Activated CD8-positive, alpha-beta T cell treated with anti-CD3 and anti-CD28 coated beads for 36 hours (primary cell): ENCODE measurements at regions of chr1 and their contacts with region 1.

Region 1: DNA sequence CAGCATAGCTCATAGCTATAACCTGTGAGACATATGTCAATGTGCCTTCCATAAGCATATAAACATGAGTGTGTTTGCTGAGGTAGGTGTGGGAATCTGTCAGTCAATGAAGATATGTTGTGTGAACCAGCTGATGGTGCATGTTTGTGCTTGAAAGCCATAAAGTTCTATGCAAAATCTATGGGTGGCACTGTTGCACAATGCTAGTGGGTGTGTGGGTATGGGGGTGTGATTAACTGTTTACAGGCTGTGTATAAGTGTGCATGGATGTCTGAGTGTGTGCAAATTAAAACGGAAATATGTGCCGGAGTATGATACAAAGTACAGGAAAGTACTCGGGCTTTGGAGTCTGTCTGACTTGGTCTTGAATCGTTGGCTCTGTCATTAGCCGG is 1.0 kb upstream of the ATP2B4 start:
- DNase-seq: peak; percentile 75
- ATAC-seq: peak; percentile 47
- H3K4me3 Mint-ChIP-seq: peak overlapping the region; percentile 90
- H3K27ac Mint-ChIP-seq: peak overlapping the region; percentile 73
- H3K4me1 Mint-ChIP-seq: peaks cover 58% of the 10 kb centered on the region
- H3K27me3 Mint-ChIP-seq: no peaks in the 10 kb centered on the region
- CTCF ChIP-seq: peak; percentile 37

Region 2: DNA sequence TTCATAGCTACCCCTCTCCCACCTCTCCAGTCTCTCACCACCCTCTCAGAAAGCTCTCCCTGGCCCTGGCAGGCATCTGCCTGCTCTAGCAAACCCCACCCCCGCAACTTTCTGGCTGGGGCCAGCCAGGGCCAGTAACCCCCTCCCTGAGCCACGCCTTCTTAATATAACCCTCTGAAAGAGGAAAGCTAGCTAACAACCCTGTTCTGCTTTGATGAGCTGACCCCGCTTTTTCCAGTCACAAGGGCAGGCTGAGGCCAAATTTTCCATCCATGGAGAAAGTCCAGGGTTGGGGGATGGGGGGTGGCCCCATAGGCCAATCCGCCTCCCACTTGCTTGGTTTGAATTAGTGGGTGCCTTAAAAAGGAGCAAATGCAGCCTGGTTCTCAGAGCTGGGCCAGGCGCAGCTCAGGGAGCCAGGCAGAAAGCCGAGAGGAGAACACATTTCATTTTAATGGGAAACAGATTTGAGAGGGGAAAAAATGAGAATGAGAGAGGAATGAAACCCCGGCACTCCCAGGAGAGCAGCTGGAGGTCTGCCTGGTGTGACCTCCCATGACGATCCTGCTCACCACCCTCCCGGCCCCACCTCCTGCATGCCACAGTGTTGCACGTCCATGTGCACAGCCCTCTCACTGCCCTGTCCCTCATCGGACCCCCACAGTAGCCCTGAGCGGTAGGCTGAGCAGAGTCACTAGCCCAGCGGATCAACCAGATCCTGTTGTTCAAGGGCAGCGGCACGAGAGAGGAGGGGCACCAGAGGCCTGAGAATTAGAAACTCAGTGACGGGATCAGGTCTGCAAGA is 69.4 kb before region 1 on chr1:
- CTCF ChIA-PET with region 1: no interaction called
- POLR2A ChIA-PET with region 1: no interaction called
- intact Hi-C with region 1: no loop called
- DNase-seq: no peak
- ATAC-seq: no peak
- H3K4me3 Mint-ChIP-seq: no peak overlapping the region
- H3K27ac Mint-ChIP-seq: no peak overlapping the region
- H3K4me1 Mint-ChIP-seq: peaks cover 3% of the 10 kb centered on the region
- H3K27me3 Mint-ChIP-seq: no peaks in the 10 kb centered on the region
- CTCF ChIP-seq: no peak

Region 3: DNA sequence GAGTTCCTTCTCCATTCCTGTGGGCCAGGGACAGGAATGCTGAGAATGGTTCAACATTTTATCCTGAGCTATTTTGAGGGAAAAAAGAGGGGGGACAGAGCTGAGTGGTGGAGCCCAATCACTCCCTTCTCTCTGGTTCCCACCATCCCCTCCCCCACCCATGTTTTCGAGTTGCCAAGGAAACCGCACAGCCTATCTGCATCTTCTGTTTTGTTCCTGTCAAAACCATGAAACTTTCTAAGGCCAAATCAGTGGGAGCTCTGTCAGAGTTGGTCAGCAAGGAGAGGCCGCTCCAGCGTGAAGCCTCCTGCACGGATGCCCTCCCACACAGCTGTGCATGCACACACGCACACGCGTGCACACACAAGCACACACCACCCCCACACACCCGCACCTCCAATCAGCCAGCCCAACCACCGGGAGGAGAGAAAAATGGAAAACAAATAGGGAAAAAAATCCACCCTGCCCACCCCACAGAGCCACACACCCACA is 53.4 kb before region 1 on chr1:
- CTCF ChIA-PET with region 1: no interaction called
- POLR2A ChIA-PET with region 1: no interaction called
- intact Hi-C with region 1: no loop called
- DNase-seq: peak; percentile 2
- ATAC-seq: no peak
- H3K4me3 Mint-ChIP-seq: no peak overlapping the region
- H3K27ac Mint-ChIP-seq: no peak overlapping the region
- H3K4me1 Mint-ChIP-seq: no peaks in the 10 kb centered on the region
- H3K27me3 Mint-ChIP-seq: no peaks in the 10 kb centered on the region
- CTCF ChIP-seq: no peak

Region 4: GRCh38 chr1:203609979-203610493 is 15.6 kb before region 1 on chr1:
- CTCF ChIA-PET with region 1: interaction called, 12 read pairs
- POLR2A ChIA-PET with region 1: interaction called, 9 read pairs
- intact Hi-C with region 1: no loop called
- DNase-seq: no peak
- ATAC-seq: no peak
- H3K4me3 Mint-ChIP-seq: no peak overlapping the region
- H3K27ac Mint-ChIP-seq: no peak overlapping the region
- H3K4me1 Mint-ChIP-seq: peaks cover 43% of the 10 kb centered on the region
- H3K27me3 Mint-ChIP-seq: no peaks in the 10 kb centered on the region
- CTCF ChIP-seq: no peak

Region 5: DNA sequence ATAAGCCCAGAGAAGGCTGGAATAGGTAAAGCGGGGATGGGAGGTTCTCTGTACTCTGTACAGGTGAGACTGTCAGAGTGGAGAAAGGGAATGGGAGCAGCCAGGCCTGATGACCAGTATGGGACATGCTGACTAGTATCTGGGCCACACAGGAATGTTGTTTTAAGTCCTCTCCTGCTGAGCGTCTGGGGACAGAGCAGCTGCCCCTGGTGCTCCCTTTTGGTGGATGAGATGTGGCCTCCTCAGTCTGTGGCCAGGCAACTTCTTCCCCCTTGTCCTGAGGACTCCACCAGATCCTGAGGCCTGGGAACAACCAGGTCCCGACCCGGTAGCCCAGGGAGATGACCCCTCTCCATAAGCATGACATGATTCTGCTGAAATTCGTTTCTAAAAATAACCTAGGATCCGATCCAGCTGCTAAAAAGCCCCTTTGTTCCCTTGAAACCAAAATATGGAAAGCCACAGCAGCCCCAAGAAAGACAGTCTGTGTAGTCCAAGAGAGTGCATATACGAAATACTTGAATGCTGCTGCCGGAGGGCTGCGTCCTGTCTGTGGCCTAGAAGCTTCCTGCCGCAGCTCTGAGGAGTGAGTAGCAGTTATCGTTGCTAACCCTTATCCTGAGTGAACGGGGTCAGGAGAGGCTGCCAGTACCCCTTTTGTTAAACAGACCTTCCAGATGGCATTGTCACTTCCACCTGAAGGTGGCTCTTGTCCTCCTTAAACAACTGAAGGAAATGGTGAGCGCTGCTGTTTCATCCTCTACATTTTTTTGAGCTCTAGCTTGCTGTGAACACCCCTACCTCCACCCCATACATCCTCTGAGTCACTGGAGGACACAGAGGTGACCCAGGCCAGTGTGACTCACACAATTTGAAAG is 48.2 kb after region 1 on chr1:
- CTCF ChIA-PET with region 1: interaction called, 15 read pairs
- POLR2A ChIA-PET with region 1: interaction called, 12 read pairs
- intact Hi-C with region 1: no loop called
- DNase-seq: peak; percentile 84
- ATAC-seq: peak; percentile 95
- H3K4me3 Mint-ChIP-seq: peak overlapping the region; percentile 50
- H3K27ac Mint-ChIP-seq: peak overlapping the region; percentile 93
- H3K4me1 Mint-ChIP-seq: peaks cover 50% of the 10 kb centered on the region
- H3K27me3 Mint-ChIP-seq: no peaks in the 10 kb centered on the region
- CTCF ChIP-seq: peak; percentile 43

Region 6: DNA sequence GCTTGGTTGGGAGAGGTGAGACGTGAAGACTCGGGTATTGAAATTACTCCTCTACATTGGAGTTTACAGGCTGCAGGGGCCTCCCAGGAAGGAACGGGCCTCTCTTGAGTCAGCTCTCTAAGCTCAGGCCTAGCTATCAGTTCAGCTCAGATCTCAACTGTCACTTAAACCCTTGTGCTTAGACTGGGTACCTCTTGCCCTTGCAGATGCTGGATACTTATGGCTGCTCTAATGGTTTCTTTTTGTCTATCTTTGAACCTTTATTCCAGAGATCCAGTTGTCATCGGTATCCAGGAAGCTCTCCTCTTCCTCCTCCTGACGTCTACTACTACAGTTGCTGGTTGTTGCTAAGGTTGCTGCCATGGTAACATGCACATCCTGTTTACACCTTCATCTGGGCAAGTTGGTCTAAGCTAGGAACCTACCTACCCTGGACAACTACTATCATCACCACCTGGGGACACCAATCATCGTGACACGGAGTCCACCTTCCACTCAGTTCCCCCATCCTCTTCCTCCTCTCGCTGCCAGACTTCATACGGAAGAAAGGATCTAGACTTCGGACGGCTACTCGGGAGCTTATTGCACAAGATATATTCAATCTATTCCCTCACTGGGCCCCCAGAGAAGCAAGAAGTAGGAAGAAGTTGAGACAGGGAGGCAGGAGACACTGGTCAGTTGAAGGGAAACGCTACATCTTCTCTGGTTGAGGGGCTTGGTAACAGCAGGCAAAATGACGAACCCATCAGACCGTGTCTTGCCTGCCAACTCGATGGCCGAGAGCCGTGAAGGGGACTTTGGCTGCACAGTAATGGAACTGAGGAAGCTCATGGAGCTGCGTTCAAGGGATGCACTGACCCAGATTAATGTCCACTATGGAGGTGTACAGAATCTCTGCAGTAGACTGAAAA is 57.1 kb after region 1 on chr1:
- CTCF ChIA-PET with region 1: interaction called, 18 read pairs
- POLR2A ChIA-PET with region 1: interaction called, 6 read pairs
- intact Hi-C with region 1: no loop called
- DNase-seq: peak; percentile 76
- ATAC-seq: peak; percentile 92
- H3K4me3 Mint-ChIP-seq: peak overlapping the region; percentile 47
- H3K27ac Mint-ChIP-seq: peak overlapping the region; percentile 81
- H3K4me1 Mint-ChIP-seq: peaks cover 31% of the 10 kb centered on the region
- H3K27me3 Mint-ChIP-seq: no peaks in the 10 kb centered on the region
- CTCF ChIP-seq: no peak